Right ventricle myocardium inferior (tissue), 1 donor: ENCODE measurements at regions of chr6 and their contacts with region 1.

Region 1: GRCh38 chr6:6724539-6725467 is 136.3 kb downstream of the LY86 start:
- DNase-seq: peak; percentile 76
- ATAC-seq: peak; percentile 92

Region 2: GRCh38 chr6:6461138-6461537 is 263.7 kb before region 1 on chr6:
- intact Hi-C with region 1: no loop called
- DNase-seq: no peak
- ATAC-seq: no peak

Region 3: DNA sequence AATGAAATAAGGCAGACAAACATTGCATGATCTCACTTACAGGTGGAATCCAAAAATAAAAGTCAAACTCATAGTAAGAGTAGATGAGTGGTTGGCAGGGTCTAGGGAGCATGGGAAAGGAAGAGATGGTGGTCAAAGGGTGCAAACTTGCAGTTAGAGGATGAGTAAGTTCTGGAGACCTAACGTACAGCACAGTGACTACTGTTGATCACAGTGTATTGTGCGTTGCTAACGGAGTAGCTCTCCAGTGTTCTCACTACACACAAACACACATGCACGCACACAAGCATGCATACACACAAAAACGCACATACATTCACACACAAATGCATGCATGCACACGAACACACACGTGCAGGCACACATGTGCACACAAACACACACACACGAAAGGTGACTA is 81.4 kb before region 1 on chr6:
- intact Hi-C with region 1: no loop called
- DNase-seq: no peak
- ATAC-seq: no peak

Region 4: DNA sequence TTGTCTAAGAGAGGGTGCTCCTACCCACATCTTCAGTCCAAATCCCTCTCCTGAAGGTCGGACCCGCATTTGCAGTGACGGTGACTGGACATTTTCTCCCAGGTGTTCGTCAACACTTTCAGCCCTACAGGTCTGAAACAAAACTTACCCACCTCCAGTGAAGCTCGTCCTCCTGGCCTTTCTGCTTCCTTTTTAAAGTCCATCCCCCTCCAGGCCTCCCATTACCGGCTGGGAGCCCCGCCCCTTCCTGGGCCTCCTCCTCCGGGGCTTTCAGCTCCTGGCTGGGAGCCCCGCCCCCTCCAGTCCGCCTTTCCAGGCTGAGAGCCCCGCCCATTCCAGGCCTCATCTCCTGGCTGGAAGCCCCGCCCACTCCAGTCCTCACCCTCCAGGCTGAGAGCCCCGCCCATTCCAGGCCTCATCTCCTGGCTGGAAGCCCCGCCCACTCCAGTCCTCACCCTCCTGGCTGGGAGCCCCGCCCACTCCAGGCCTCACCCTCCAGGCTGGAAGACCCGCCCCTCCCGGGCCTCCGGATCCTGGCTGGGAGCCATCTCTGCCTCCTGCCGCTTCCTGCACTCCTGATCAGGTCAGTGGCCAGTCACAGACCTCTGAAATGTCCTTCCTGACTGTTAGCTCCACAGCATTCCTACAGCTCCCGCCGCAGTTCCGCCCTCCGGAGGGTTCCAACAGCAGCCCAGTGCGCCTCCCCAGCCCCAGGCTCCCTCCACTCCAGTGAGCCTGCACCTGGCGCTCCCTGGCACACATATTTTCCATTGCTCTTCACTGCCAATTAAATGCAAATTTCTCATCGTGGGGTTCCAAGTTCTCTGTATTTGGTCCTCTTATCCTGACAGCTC is 37.8 kb before region 1 on chr6:
- intact Hi-C with region 1: loop called (anchors 5 kb)
- DNase-seq: peak; percentile 97
- ATAC-seq: peak; percentile 88

Region 5: DNA sequence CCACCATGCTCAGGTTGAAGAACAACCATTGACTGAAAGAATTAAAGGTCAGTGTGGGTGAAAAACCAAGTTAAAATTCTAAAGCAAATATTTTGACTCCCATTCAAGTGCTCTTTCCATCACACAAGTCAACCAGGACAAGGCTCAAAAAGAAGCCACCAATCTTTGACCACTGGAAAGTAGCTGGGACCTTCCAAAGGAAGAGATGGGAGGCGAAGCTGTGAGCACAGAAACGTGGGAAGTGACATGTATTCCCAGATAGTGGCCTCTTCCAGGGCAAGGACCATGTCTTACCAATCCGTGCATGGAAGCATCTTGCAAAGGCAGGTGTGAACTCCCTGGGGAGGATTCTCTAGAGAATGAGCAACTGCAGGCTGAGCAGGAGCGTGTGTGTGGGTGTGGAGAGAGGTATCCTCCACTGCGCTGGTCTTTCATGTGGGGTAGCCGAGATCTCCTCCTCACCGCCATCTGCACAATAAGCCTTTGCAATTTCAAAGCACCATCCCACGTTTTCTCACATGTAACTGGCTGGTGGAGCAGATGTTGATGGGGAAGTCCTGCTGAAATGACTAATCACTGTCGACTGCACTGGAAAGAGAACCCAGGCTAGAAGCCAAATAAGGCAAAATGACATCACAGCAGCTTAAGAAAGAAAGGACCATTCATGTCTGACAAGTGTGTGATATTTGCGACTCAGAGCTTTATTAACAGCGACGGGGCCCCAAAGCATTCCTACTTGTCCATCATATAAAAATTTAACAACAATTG is 193.6 kb after region 1 on chr6:
- intact Hi-C with region 1: loop called (anchors 5 kb)
- DNase-seq: no peak
- ATAC-seq: no peak

Region 6: DNA sequence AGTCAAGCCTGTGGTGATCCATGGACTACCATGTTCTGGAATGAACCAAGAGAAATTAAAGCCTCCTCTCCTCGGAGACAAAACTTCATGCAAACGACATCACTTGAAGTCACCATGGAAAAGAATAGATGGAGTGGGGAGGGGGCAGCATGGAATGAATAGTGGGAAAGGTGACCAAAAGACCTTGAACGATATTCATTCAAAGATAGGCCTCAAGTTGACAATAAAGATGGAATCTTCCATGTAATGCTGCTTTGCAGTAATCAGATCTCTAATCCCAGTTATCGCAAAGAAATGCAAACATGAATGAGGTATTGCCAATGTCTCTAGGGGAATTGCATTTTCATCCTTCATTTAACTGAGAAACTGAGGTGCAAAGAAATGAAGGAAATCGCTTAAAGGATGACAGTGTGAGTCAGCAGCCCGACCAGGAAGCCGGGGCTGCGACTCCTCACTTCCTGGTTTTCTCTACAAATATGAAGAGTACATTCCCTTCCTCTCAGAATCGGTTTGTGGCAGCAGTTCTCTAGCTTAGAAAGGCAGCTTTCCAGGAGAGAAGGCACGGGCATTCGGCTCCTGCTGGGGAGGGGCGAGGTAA is 317.4 kb after region 1 on chr6:
- intact Hi-C with region 1: loop called (anchors 5 kb)
- DNase-seq: no peak
- ATAC-seq: peak; percentile 14

Region 7: DNA sequence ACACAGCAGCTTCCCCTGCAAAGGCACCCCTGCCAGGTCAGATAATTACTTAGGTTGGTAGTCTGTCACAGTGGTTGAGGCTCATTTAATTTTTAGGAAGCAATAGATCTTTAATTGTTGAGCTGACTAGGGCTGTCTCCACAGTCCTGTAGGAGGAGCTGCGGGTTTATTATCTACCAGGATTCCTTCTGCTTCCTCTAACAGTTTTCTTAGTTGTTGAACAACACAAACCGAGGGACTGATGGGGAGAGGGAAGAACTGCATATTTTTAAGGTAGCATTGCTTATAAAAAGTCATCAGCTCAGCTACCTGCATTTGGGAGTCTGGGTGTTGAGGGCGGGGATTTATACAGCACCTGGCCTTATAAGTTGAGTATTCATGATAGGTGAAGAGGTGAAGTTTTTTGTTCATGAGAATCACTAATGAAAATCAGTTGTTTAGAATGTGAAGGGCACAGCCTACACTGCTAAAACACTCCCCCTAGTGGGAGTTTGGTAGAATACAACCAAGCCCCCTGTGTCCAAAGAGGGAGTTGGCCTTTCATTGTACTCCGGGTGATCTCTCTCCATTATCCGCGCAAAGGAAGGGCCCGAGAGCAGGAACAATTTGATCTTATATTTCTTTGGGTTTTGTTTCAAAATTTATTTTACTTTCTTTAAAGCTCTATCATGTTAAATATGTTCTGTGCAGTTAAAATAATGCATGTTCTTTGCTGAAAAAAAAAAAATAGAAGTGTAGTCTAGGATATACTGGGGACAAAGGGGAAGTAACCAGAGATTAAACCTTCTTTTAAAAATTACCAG is 518.6 kb after region 1 on chr6:
- intact Hi-C with region 1: loop called (anchors 2 kb)
- DNase-seq: no peak
- ATAC-seq: peak; percentile 51

Region 8: DNA sequence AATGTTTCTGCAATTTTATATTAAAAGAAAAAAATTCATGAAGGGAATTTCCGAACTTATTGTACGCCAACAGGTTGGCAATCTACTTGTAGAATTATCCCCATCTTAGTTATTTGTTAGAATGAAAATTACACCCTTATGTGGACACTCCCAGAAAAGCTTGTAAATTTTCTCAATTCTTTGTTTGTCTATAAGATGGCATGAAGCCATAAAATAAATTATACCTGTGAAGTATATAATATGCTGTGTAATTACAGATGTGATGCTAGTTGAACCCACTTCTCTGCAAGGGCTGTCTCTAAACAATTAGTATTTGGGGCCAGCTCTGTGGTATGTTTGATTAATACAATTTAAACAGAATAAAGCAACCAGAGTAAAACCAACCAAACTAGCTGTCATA is 764.6 kb after region 1 on chr6:
- intact Hi-C with region 1: no loop called
- DNase-seq: no peak
- ATAC-seq: no peak